Psoas muscle (tissue), 8 donors: ENCODE measurements at regions of chr4 and their contacts with region 1.

Region 1: DNA sequence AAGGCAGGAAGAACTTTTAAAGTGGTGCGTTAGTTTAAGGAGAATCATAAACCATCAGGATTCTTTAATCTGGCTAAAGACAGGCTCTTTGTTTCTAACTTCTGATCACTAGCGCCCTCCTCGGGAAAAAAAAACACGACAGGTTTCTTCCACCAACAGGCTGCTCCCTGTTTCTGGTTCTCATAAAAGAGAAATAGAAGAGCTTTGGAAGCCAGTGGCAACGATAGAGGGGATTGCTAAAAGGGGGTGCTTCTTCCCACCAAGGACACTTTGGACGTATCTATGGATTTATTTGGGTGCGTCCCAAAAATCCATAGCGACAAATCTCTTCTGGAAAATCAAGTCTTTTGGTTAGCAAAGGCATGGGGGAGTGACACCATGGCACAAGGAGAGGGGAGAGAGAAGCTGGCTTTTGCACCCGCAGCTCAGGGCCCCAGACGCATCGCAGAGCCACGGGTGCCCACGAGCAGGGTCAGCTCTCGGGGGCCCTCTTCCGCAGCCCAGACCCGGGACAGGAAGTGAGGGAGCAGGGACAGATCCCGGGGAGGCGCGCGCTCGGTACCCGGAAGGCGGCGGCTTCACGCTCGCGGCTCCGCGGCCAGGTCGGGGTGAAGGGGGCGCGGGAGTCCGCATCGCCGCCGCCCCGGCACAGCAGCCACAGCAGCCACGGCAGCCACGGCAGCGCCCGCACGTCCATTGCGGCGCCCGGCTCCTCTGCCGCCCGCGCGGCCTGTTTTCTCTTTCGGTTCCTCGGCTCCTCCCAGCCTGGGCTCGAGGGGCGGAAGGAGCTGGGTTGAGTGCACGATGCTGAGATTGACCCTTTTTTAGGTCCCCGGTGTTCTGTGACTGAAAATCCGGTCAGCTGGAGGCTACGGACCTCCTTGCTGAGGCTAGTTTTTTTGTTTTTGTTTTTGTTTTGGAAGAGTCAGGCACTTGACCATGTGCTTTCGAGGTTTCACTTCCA is at the start of gene CTSO:
- DNase-seq: peak; percentile 75 to 85
- ATAC-seq: peak; percentile 77 to 95 (median 92)
- H3K4me3 ChIP-seq: peak within 1 kb of the TSS; percentile 82
- H3K27ac ChIP-seq: peak within 1 kb of the TSS; percentile 88
- H3K4me1 ChIP-seq: no peaks in the 10 kb centered on the region
- H3K27me3 ChIP-seq: no peaks in the 10 kb centered on the region
- CTCF ChIP-seq: peak; percentile 56
- total RNA-seq, gene CTSO: 2.9 to 4.2 (median 3.5) TPM

Region 2: DNA sequence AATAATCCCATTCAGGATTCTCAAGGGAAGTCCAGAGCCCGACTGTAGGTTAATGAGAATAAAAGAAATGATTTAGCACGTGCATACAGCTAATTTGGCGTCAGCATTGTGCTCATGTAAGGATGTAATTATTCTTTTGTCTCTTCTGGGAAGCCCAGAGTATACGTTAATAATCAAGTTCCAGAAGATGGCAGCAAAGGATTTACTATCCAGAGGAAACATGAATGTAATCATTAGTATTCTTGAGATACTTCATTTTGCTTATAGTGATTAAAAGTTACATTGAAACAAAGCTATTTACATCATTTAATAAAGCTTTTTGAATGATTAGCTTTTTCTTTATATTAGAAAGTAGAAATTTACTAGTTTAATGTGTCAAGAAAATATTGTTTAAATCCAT is 549.5 kb before region 1 on chr4:
- intact Hi-C with region 1: loop called in 1 of 2 experiments (anchors 10 kb)
- DNase-seq: no peak
- ATAC-seq: no peak
- H3K4me3 ChIP-seq: no peak overlapping the region
- H3K27ac ChIP-seq: no peak overlapping the region
- H3K4me1 ChIP-seq: no peaks in the 10 kb centered on the region
- H3K27me3 ChIP-seq: no peaks in the 10 kb centered on the region
- CTCF ChIP-seq: peak; percentile 25

Region 3: DNA sequence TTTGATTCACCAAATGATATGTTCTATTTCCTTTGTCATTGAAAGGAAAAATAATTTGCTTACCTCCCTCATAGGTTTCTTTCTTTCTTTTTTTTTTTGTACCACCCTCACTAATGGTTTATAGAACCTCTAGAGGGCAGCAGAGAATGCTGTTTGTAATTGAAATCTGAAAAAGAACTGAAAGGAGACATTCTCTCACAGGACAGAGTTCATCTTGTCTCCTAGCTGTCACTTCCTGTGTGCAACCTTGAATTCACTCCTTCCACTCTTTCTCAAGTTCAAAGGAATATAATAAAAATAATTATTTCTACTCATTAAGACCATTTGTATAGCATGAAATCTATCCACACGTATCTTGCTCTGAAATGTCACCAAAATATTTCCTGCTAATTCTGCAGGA is 143.6 kb before region 1 on chr4:
- intact Hi-C with region 1: loop called (anchors 5 to 10 kb)
- DNase-seq: no peak
- ATAC-seq: peak in 3 of 4 donors; percentile 42 to 67 (median 56)
- H3K4me3 ChIP-seq: no peak overlapping the region
- H3K27ac ChIP-seq: no peak overlapping the region
- H3K4me1 ChIP-seq: no peaks in the 10 kb centered on the region
- H3K27me3 ChIP-seq: no peaks in the 10 kb centered on the region
- CTCF ChIP-seq: peak; percentile 66